Endothelial cell of umbilical vein (primary cell): ENCODE measurements at regions of chr9 and their contacts with region 1.

Region 1: GRCh38 chr9:77588271-77588937 is 59.7 kb downstream of the GNA14 start:
- DNase-seq: peak; percentile 92
- H3K4me3 ChIP-seq: peak overlapping the region in 1 of 3 experiments; percentile 24
- H3K27ac ChIP-seq: peak overlapping the region; percentile 93
- H3K4me1 ChIP-seq: peaks cover 35% of the 10 kb centered on the region
- H3K27me3 ChIP-seq: no peaks in the 10 kb centered on the region
- CTCF ChIP-seq: no peak
- POLR2A ChIP-seq: no peak

Region 2: DNA sequence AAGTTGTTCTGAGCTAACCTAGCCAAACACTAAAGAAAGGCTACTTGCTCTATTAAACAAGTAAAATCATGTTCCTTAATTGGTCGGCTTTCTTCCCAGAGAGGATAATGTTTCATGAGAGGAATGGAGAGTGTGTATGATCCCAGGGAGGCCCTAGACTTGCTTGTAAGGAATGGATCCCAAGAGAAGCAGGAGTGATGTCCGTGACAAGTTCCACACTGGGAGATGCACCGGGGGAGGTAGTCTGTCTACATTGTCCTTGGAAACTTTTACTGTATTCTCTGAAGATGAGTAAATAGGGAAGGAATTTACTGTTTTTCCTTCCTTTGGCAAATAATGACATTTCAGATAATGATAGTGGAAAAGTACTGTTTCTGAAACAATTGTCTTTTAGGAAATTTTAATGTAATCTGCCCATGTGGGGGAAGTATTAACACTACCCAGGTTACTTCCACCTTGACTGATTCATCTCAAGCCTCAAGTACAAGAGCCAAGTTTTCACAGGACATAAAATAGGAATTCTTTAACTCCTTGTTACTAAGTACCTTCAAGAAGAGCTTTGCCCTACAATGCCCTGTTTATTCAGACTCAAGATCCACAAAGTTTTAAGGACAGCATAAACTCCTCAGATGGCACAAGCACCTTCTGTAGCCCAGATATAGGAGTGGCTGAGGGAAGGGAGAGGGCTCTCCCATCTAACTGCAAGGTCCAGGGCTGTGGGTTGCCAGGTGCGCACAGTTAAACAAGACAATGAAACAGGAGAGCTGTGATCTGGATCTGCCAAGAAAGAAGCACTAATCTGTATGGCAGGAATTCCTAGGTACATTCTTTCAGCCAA is 92.4 kb before region 1 on chr9:
- CTCF ChIA-PET with region 1: no interaction called
- POLR2A ChIA-PET with region 1: no interaction called
- dilution Hi-C with region 1: no loop called
- intact Hi-C with region 1: no loop called
- DNase-seq: peak; percentile 43
- H3K4me3 ChIP-seq: no peak overlapping the region
- H3K27ac ChIP-seq: no peak overlapping the region
- H3K4me1 ChIP-seq: peaks cover 14% of the 10 kb centered on the region
- H3K27me3 ChIP-seq: no peaks in the 10 kb centered on the region
- CTCF ChIP-seq: no peak
- POLR2A ChIP-seq: no peak

Region 3: DNA sequence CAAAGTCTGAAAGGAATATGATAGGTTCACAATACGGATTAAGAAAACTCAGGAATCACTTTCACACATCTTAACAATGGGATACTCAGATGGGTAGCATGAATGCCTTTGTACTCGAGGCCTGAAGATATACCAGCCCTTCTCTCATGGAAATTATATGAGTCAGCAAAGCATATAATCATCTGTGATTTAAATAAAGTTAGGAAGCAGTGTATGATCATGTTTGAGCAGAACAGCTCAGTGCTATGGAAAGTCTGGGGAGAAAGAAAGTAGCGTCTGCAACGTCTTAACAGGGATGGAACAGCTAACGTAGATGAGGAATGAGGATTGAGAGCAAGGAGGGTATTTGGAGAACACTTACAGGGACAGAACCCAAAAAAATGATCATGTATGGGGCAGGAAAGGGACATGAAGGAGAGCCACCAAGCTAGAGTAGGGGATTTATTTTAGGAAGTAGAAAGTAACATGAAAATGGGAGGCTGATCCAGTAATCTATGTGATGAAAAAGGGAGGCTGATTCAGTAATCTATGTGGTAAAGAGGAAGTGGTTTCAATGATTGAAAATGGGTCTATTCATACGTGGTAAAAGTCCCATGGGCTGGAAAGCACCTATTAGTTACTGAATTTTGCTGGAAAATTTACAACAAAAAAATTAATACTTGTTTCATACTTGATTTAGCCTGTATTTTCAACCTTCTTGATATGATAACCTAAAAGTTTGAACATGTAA is 26.2 kb before region 1 on chr9:
- CTCF ChIA-PET with region 1: no interaction called
- POLR2A ChIA-PET with region 1: no interaction called
- dilution Hi-C with region 1: no loop called
- intact Hi-C with region 1: loop called (anchors 1 kb)
- DNase-seq: no peak
- H3K4me3 ChIP-seq: no peak overlapping the region
- H3K27ac ChIP-seq: peak overlapping the region; percentile 43
- H3K4me1 ChIP-seq: peaks cover 14% of the 10 kb centered on the region
- H3K27me3 ChIP-seq: no peaks in the 10 kb centered on the region
- CTCF ChIP-seq: no peak
- POLR2A ChIP-seq: no peak

Region 4: GRCh38 chr9:77598524-77598923 is 10.1 kb after region 1 on chr9:
- CTCF ChIA-PET with region 1: interaction called, 11 read pairs
- POLR2A ChIA-PET with region 1: no interaction called
- dilution Hi-C with region 1: no loop called
- intact Hi-C with region 1: loop called (anchors 1 kb)
- DNase-seq: peak; percentile 89
- H3K4me3 ChIP-seq: no peak overlapping the region
- H3K27ac ChIP-seq: no peak overlapping the region
- H3K4me1 ChIP-seq: peaks cover 45% of the 10 kb centered on the region
- H3K27me3 ChIP-seq: no peaks in the 10 kb centered on the region
- CTCF ChIP-seq: no peak
- POLR2A ChIP-seq: no peak

Region 5: GRCh38 chr9:77712533-77713130 is 124.2 kb after region 1 on chr9:
- CTCF ChIA-PET with region 1: interaction called, 3 read pairs
- POLR2A ChIA-PET with region 1: no interaction called
- dilution Hi-C with region 1: no loop called
- intact Hi-C with region 1: loop called (anchors 2 kb)
- DNase-seq: peak; percentile 81
- H3K4me3 ChIP-seq: peak overlapping the region in 1 of 3 experiments; percentile 19
- H3K27ac ChIP-seq: peak overlapping the region; percentile 97
- H3K4me1 ChIP-seq: peaks cover 69% of the 10 kb centered on the region
- H3K27me3 ChIP-seq: no peaks in the 10 kb centered on the region
- CTCF ChIP-seq: no peak
- POLR2A ChIP-seq: no peak